Heart right ventricle (tissue), 16 donors: ENCODE measurements at regions of chr11 and their contacts with region 1.

Region 1: GRCh38 chr11:78228467-78228866 is 39.7 kb downstream of the USP35 start:
- DNase-seq: peak in 1 of 2 donors; percentile 55
- ATAC-seq: peak; percentile 53 to 80 (median 64)
- H3K4me3 ChIP-seq: no peak overlapping the region
- H3K27ac ChIP-seq: peak overlapping the region in 1 of 10 donors; percentile 10
- H3K4me1 ChIP-seq: peaks cover 0 to 46% (median 34%) of the 10 kb centered on the region in 9 donors
- H3K27me3 ChIP-seq: no peaks in the 10 kb centered on the region
- CTCF ChIP-seq: peak; percentile 31 to 81 (median 63)

Region 2: GRCh38 chr11:77908835-77909234 is 319.6 kb before region 1 on chr11:
- intact Hi-C with region 1: no loop called
- DNase-seq: no peak
- ATAC-seq: no peak
- H3K4me3 ChIP-seq: no peak overlapping the region
- H3K27ac ChIP-seq: no peak overlapping the region
- H3K4me1 ChIP-seq: peaks cover 0 to 2% (median 0%) of the 10 kb centered on the region in 9 donors
- H3K27me3 ChIP-seq: no peaks in the 10 kb centered on the region
- CTCF ChIP-seq: no peak

Region 3: GRCh38 chr11:78188286-78189173 is 39.9 kb before region 1 on chr11 and contains the starts of genes KCTD21 and USP35:
- intact Hi-C with region 1: no loop called
- DNase-seq: peak; percentile 97 to 98
- ATAC-seq: peak; percentile 97 to 98 (median 98)
- H3K4me3 ChIP-seq: peak within 1 kb of the TSS; percentile 68 to 89 (median 82)
- H3K27ac ChIP-seq: peak within 1 kb of the TSS; percentile 34 to 90 (median 84)
- H3K4me1 ChIP-seq: peaks cover 6 to 59% (median 36%) of the 10 kb centered on the region in 9 donors
- H3K27me3 ChIP-seq: no peaks in the 10 kb centered on the region
- CTCF ChIP-seq: no peak
- total RNA-seq, gene KCTD21: 4.2 to 9.9 (median 6.7) TPM
- total RNA-seq, gene USP35: 3.6 to 6.6 (median 5.2) TPM

Region 4: GRCh38 chr11:78268591-78269410 is 40.3 kb after region 1 on chr11:
- intact Hi-C with region 1: no loop called
- DNase-seq: peak; percentile 29 to 58
- ATAC-seq: peak; percentile 90 to 96 (median 92)
- H3K4me3 ChIP-seq: no peak overlapping the region
- H3K27ac ChIP-seq: peak overlapping the region in 9 of 10 donors; percentile 43 to 79 (median 68)
- H3K4me1 ChIP-seq: peaks cover 0 to 50% (median 23%) of the 10 kb centered on the region in 9 donors
- H3K27me3 ChIP-seq: no peaks in the 10 kb centered on the region
- CTCF ChIP-seq: no peak

Region 5: GRCh38 chr11:78310500-78310909 is 82.0 kb after region 1 on chr11:
- intact Hi-C with region 1: loop called in 1 of 10 experiments (anchors 5 kb)
- DNase-seq: peak; percentile 73 to 77
- ATAC-seq: peak; percentile 85 to 95 (median 88)
- H3K4me3 ChIP-seq: peak overlapping the region in 4 of 10 donors; percentile 23 to 30 (median 26)
- H3K27ac ChIP-seq: peak overlapping the region in 9 of 10 donors; percentile 6 to 80 (median 70)
- H3K4me1 ChIP-seq: peaks cover 20 to 69% (median 61%) of the 10 kb centered on the region in 9 donors
- H3K27me3 ChIP-seq: no peaks in the 10 kb centered on the region
- CTCF ChIP-seq: no peak

Region 6: DNA sequence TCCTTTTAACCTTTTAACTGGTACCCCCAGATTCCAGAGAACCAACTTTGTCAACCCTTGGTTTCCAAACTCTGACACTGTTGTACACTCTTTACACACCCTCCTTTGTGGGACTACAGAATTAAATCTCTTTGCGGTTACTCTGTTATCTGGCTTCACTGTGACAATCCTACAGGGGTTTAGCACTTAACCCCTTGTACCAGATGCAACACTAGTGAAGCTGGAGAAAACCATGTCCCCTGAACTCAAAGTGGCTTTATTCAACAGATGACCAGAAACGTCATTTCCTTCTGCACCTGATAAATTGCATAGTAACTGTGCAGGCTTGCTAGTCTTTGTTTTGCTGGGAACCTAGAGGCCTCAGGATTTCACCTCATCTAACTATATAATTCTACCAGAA is 194.8 kb after region 1 on chr11:
- intact Hi-C with region 1: loop called in 9 of 10 experiments (anchors 2 to 5 kb)
- DNase-seq: no peak
- ATAC-seq: no peak
- H3K4me3 ChIP-seq: no peak overlapping the region
- H3K27ac ChIP-seq: peak overlapping the region in 1 of 10 donors; percentile 90
- H3K4me1 ChIP-seq: peaks cover 3 to 74% (median 38%) of the 10 kb centered on the region in 9 donors
- H3K27me3 ChIP-seq: no peaks in the 10 kb centered on the region
- CTCF ChIP-seq: no peak

Region 7: DNA sequence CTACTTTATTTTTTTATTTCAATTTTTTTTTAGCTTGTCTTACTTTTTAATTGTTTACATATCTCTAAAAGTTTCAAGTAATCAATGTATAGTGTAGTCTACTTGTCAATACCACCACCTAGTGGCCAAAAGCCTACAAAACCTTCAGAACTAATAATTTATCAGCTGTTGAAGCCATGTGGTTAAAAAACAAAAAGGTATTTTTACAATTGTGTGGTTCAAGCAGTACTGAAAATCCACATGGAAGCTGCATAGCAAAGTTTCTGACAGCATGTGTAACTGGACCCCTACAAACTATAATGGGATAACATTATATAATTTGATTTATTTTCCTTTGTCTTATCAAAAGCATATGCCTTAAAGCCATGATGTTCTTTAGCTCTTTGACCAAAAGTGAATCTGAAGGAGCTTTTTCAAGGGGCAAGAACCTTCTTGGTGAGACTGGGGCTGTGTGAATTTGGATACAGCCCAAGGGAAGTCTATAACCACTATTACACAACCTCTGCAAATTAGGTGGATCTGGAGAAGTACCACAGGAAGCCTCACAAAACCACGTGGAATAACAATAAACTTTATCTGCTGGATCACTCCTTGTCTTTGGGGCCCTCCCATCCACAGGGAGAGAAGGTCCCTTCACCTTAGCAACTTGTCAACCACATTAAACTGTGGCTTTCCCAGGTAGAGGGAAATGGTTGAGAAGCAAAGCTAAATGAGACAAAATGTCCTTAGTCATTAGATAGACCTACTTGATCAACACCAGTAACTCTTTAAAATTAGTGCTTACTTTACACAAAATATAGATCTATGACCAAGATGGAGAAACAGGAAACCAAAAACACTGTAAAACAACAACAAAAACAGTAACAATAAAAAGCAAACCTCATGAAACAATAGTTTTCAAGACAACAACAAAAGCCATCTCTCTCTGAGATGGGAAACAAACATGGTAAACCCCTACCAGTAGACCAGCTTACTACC is 336.3 kb after region 1 on chr11:
- intact Hi-C with region 1: loop called (anchors 1 to 10 kb)
- DNase-seq: peak in 1 of 2 donors; percentile 57
- ATAC-seq: peak in 6 of 8 donors; percentile 30 to 64 (median 54)
- H3K4me3 ChIP-seq: no peak overlapping the region
- H3K27ac ChIP-seq: peak overlapping the region in 1 of 10 donors; percentile 7
- H3K4me1 ChIP-seq: peaks cover 9 to 43% (median 31%) of the 10 kb centered on the region in 9 donors
- H3K27me3 ChIP-seq: no peaks in the 10 kb centered on the region
- CTCF ChIP-seq: peak; percentile 56 to 87 (median 80)